GM12878 (cell line): ENCODE measurements at regions of chr1 and their contacts with region 1.

Region 1: DNA sequence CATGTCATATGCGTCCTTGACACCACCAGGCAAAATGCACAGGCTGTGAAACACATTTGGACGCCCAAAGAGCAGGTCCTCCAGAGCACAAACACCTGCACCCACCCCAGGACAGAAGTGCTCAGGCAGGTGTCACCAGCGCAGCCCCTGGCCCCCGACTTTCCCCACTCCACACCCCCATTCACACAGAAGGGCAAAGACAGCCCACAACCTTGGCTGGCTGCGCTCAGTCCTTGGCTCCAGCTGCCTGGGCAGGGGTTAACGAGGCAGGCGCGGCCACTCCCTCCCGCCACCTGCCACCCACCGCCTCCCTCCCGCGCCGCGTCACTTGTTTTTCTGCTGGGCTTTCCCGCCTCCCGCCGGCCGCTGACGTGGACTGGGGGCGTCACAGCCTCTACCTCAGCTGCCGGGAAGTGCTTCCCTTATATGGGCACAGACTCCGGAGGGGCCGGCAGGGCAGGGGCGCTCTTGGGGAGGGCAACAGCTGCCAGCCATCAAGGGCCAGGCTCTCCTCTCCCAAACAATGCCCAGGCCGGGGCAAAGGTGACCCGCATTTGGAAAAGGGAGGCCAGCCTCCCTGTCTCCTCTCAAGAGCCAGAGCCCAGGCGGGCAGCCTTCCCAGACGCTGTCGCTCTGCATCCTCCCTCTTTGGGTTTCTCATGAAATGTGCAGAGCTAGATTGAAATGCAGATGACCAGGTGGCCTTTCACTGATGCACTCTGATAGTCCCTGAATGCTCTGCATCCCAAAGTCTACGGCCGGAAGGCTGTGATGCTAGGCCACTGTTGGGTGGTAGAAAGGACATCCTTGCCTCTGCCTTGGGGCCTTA is 14.8 kb upstream of the BTG2 start:
- DNase-seq: no peak
- ATAC-seq: peak; percentile 72
- H3K4me3 ChIP-seq: peak overlapping the region; percentile 65
- H3K27ac ChIP-seq: peak overlapping the region; percentile 100
- H3K4me1 ChIP-seq: peaks cover 58% of the 10 kb centered on the region
- H3K27me3 ChIP-seq: no peaks in the 10 kb centered on the region
- CTCF ChIP-seq: no peak
- EP300 ChIP-seq: peak; percentile 42 to 60; a peak in 3 of 4 replicates
- POLR2A ChIP-seq: peak; percentile 86
- RAD21 ChIP-seq: no peak

Region 2: DNA sequence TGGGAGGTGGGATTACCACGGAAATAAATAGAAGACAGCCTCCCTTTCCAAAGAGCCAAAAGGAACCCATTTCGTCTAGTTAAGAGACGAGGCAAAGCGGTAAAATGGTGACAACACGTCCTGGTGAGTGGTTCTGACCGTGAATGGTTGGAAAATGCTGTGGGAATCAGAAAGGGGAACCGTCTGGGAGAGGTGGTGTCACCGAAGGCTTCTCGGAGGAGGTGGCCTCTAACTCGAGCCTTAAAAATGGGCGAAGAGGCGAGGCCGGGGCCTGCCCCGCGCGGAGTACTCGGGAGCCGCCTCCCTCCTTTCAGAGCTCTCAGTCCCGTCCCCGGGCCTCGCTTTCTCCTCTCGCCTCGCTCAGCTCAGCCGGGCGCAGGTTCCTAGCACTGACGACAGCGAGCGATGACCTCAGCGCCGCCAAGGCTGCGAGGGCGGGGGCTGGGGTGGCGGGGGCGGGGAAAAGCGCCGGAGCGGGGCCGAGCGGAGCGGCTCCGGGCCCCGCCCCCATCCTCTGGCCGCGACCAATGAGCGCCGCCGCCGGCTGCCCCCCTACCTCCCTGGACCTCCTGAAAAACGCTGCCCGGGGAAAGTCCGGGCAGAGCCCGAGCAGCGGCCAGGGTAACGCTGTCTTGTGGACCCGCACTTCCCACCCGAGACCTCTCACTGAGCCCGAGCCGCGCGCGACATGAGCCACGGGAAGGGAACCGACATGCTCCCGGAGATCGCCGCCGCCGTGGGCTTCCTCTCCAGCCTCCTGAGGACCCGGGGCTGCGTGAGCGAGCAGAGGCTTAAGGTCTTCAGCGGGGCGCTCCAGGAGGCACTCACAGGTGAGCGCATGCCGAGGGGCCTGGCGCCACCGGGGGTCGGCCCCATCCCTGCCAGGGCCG is 14.7 kb after region 1 on chr1 and contains the start of gene BTG2:
- CTCF ChIA-PET with region 1: interaction called, 106 read pairs
- POLR2A ChIA-PET with region 1: interaction called, 370 read pairs
- RAD21 ChIA-PET with region 1: interaction called, 470 read pairs
- SMC1A ChIA-PET with region 1: interaction called, 184 read pairs
- in situ Hi-C with region 1: no loop called
- intact Hi-C with region 1: loop called (anchors 1 kb)
- DNase-seq: no peak
- ATAC-seq: peak; percentile 82
- H3K4me3 ChIP-seq: peak within 1 kb of the TSS; percentile 97
- H3K27ac ChIP-seq: peak within 1 kb of the TSS; percentile 91
- H3K4me1 ChIP-seq: peaks cover 38% of the 10 kb centered on the region
- H3K27me3 ChIP-seq: no peaks in the 10 kb centered on the region
- CTCF ChIP-seq: no peak
- EP300 ChIP-seq: no peak
- POLR2A ChIP-seq: peak; percentile 98
- RAD21 ChIP-seq: 0 out of 2 replicates have a peak, but pooled peaks have one; percentile 8
- polyA plus RNA-seq, gene BTG2: 23.3 to 37.2 TPM

Region 3: GRCh38 chr1:203320591-203321272 is 30.3 kb after region 1 on chr1:
- CTCF ChIA-PET with region 1: interaction called, 207 read pairs
- POLR2A ChIA-PET with region 1: interaction called, 395 read pairs
- RAD21 ChIA-PET with region 1: interaction called, 541 read pairs
- SMC1A ChIA-PET with region 1: interaction called, 590 read pairs
- in situ Hi-C with region 1: no loop called
- intact Hi-C with region 1: loop called (anchors 1 kb)
- DNase-seq: no peak
- ATAC-seq: peak; percentile 68
- H3K4me3 ChIP-seq: no peak overlapping the region; the same call in 1 of the 2 replicates
- H3K27ac ChIP-seq: peak overlapping the region; percentile 70
- H3K4me1 ChIP-seq: peaks cover 56% of the 10 kb centered on the region
- H3K27me3 ChIP-seq: no peaks in the 10 kb centered on the region
- CTCF ChIP-seq: no peak
- EP300 ChIP-seq: peak; percentile 47 to 89; a peak in 2 of 4 replicates
- POLR2A ChIP-seq: no peak; the same call in 1 of the 2 replicates
- RAD21 ChIP-seq: no peak

Region 4: GRCh38 chr1:203326830-203327683 is 36.6 kb after region 1 on chr1:
- CTCF ChIA-PET with region 1: interaction called, 207 read pairs
- POLR2A ChIA-PET with region 1: interaction called, 395 read pairs
- RAD21 ChIA-PET with region 1: interaction called, 541 read pairs
- SMC1A ChIA-PET with region 1: interaction called, 590 read pairs
- in situ Hi-C with region 1: no loop called
- intact Hi-C with region 1: loop called (anchors 1 kb)
- DNase-seq: peak; percentile 88
- ATAC-seq: peak; percentile 81
- H3K4me3 ChIP-seq: peak overlapping the region; percentile 60
- H3K27ac ChIP-seq: peak overlapping the region; percentile 98
- H3K4me1 ChIP-seq: peaks cover 62% of the 10 kb centered on the region
- H3K27me3 ChIP-seq: no peaks in the 10 kb centered on the region
- CTCF ChIP-seq: peak in 2 of 3 experiments; percentile 12 to 22; a peak in 1 of 6 replicates
- EP300 ChIP-seq: peak; percentile 62 to 85; a peak in 3 of 4 replicates
- POLR2A ChIP-seq: peak; percentile 78
- RAD21 ChIP-seq: no peak

Region 5: DNA sequence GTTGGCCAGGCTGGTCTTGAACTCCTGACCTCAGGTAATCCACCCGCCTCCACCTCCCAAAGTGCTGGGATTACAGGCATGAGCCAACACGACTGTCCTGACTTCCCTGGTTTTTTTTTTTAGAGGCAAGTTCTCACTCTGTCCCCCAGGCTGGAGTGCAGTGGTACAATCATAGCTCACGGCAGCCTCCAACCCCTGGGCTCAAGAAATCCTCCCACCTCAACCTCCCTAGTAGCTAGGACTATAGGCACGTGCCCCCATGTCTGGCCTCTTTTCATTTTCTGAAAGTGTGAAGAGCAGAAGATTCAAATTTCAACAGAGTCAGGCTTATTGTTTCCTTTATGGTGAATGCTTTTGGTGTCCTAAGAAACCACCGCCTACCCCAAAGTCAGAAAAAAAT is 760.8 kb after region 1 on chr1:
- CTCF ChIA-PET with region 1: no interaction called
- POLR2A ChIA-PET with region 1: no interaction called
- RAD21 ChIA-PET with region 1: no interaction called
- SMC1A ChIA-PET with region 1: no interaction called
- in situ Hi-C with region 1: no loop called
- intact Hi-C with region 1: no loop called
- DNase-seq: no peak
- ATAC-seq: no peak
- H3K4me3 ChIP-seq: no peak overlapping the region
- H3K27ac ChIP-seq: no peak overlapping the region
- H3K4me1 ChIP-seq: no peaks in the 10 kb centered on the region
- H3K27me3 ChIP-seq: no peaks in the 10 kb centered on the region
- CTCF ChIP-seq: no peak
- EP300 ChIP-seq: no peak
- POLR2A ChIP-seq: no peak
- RAD21 ChIP-seq: no peak